ENCODE measurements at regions of chr15 and their contacts with region 1.

Region 1: DNA sequence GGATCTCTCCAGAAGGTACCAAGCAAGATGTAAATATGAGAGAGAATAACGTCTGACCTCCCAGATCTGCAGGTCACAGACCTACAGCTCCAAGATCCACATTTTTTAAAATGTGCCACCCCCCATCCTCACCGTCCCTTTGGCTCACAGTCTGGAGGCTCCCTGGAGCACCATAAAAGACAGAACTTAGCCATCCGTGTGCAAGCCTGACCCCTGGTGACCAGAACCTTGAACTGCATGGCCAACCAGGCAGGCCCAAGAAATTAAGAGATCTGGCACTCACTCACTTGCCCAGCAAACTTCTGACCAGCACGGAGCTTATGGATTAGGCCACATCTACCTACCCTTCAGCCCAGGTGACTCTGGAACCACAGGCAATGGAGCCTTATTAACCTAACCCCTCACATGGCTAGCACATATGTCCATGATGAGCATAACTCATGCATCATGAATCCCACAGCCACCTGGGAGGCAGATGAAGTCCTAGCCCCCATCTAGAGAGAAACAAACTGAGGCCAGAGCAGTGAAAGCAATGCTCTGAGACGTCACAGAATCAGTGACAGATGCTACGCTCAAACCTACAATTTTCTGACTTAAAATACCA is 275.3 kb downstream of the UACA start:
- DNase-seq: peak; percentile 77
- H3K4me3 ChIP-seq: no peak overlapping the region
- H3K27ac ChIP-seq: no peak overlapping the region
- H3K4me1 ChIP-seq: peaks cover 4% of the 10 kb centered on the region
- H3K27me3 ChIP-seq: peaks cover 0 to 4% of the 10 kb centered on the region in 2 experiments
- CTCF ChIP-seq: peak; percentile 89 to 90
- POLR2A ChIP-seq: no peak

Region 2: GRCh38 chr15:69475769-69476358 is 1012.2 kb before region 1 on chr15:
- CTCF ChIA-PET with region 1: interaction called, 15 read pairs
- POLR2A ChIA-PET with region 1: no interaction called
- dilution Hi-C with region 1: no loop called
- intact Hi-C with region 1: loop called (anchors 1 kb)
- DNase-seq: peak; percentile 79
- H3K4me3 ChIP-seq: no peak overlapping the region
- H3K27ac ChIP-seq: no peak overlapping the region
- H3K4me1 ChIP-seq: peaks cover 15% of the 10 kb centered on the region
- H3K27me3 ChIP-seq: no peaks in the 10 kb centered on the region
- CTCF ChIP-seq: peak; percentile 90 to 91
- POLR2A ChIP-seq: no peak

Region 3: GRCh38 chr15:69576035-69576526 is 912.0 kb before region 1 on chr15:
- CTCF ChIA-PET with region 1: interaction called, 7 read pairs
- POLR2A ChIA-PET with region 1: no interaction called
- dilution Hi-C with region 1: no loop called
- intact Hi-C with region 1: loop called (anchors 1 kb)
- DNase-seq: peak; percentile 22
- H3K4me3 ChIP-seq: no peak overlapping the region
- H3K27ac ChIP-seq: no peak overlapping the region
- H3K4me1 ChIP-seq: peaks cover 4% of the 10 kb centered on the region
- H3K27me3 ChIP-seq: peaks cover 2 to 6% of the 10 kb centered on the region in 2 experiments
- CTCF ChIP-seq: peak; percentile 44 to 73
- POLR2A ChIP-seq: no peak

Region 4: GRCh38 chr15:70259028-70259424 is 229.1 kb before region 1 on chr15:
- CTCF ChIA-PET with region 1: interaction called, 3 read pairs
- POLR2A ChIA-PET with region 1: no interaction called
- dilution Hi-C with region 1: no loop called
- intact Hi-C with region 1: loop called (anchors 5 kb)
- DNase-seq: peak; percentile 49
- H3K4me3 ChIP-seq: no peak overlapping the region
- H3K27ac ChIP-seq: no peak overlapping the region
- H3K4me1 ChIP-seq: no peaks in the 10 kb centered on the region
- H3K27me3 ChIP-seq: peaks cover 0 to 3% of the 10 kb centered on the region in 2 experiments
- CTCF ChIP-seq: no peak
- POLR2A ChIP-seq: no peak

Region 5: GRCh38 chr15:70437882-70438331 is 50.2 kb before region 1 on chr15:
- CTCF ChIA-PET with region 1: no interaction called
- POLR2A ChIA-PET with region 1: no interaction called
- dilution Hi-C with region 1: no loop called
- intact Hi-C with region 1: no loop called
- DNase-seq: no peak
- H3K4me3 ChIP-seq: no peak overlapping the region
- H3K27ac ChIP-seq: no peak overlapping the region
- H3K4me1 ChIP-seq: no peaks in the 10 kb centered on the region
- H3K27me3 ChIP-seq: peaks cover 3 to 8% of the 10 kb centered on the region in 2 experiments
- CTCF ChIP-seq: no peak
- POLR2A ChIP-seq: no peak

Region 6: GRCh38 chr15:70466895-70467529 is 21.1 kb before region 1 on chr15:
- CTCF ChIA-PET with region 1: interaction called, 14 read pairs
- POLR2A ChIA-PET with region 1: no interaction called
- dilution Hi-C with region 1: no loop called
- intact Hi-C with region 1: no loop called
- DNase-seq: peak; percentile 38
- H3K4me3 ChIP-seq: no peak overlapping the region
- H3K27ac ChIP-seq: no peak overlapping the region
- H3K4me1 ChIP-seq: no peaks in the 10 kb centered on the region
- H3K27me3 ChIP-seq: peaks cover 3 to 6% of the 10 kb centered on the region in 2 experiments
- CTCF ChIP-seq: peak; percentile 46 to 70
- POLR2A ChIP-seq: no peak